Activated T-helper 1 cell treated with anti-CD3 and anti-CD28 coated beads, Interleukin-12 subunit alpha, Interleukin-12 subunit beta, Interleukin-2, Interleukin-4 antibody, amounts not matched to agents 30 ng/mL and 10 ng/mL and 1 ng/mL, durations not matched to agents 14 hours and 24 hours and 36 hours (primary cell): ENCODE measurements at regions of chr9 and their contacts with region 1.

Region 1: GRCh38 chr9:129177791-129178559 is at the start of gene IER5L:
- DNase-seq: peak; percentile 93
- H3K4me3 Mint-ChIP-seq: peak within 1 kb of the TSS; percentile 91
- H3K27ac Mint-ChIP-seq: peak within 1 kb of the TSS; percentile 61
- H3K4me1 Mint-ChIP-seq: peaks cover 16% of the 10 kb centered on the region
- H3K27me3 Mint-ChIP-seq: peaks cover 7% of the 10 kb centered on the region
- total RNA-seq, gene IER5L: 14.4 TPM in 2 replicates

Region 2: GRCh38 chr9:129093421-129094204 is 84.4 kb before region 1 on chr9:
- intact Hi-C with region 1: no loop called
- DNase-seq: no peak
- H3K4me3 Mint-ChIP-seq: no peak overlapping the region
- H3K27ac Mint-ChIP-seq: no peak overlapping the region
- H3K4me1 Mint-ChIP-seq: no peaks in the 10 kb centered on the region
- H3K27me3 Mint-ChIP-seq: no peaks in the 10 kb centered on the region

Region 3: DNA sequence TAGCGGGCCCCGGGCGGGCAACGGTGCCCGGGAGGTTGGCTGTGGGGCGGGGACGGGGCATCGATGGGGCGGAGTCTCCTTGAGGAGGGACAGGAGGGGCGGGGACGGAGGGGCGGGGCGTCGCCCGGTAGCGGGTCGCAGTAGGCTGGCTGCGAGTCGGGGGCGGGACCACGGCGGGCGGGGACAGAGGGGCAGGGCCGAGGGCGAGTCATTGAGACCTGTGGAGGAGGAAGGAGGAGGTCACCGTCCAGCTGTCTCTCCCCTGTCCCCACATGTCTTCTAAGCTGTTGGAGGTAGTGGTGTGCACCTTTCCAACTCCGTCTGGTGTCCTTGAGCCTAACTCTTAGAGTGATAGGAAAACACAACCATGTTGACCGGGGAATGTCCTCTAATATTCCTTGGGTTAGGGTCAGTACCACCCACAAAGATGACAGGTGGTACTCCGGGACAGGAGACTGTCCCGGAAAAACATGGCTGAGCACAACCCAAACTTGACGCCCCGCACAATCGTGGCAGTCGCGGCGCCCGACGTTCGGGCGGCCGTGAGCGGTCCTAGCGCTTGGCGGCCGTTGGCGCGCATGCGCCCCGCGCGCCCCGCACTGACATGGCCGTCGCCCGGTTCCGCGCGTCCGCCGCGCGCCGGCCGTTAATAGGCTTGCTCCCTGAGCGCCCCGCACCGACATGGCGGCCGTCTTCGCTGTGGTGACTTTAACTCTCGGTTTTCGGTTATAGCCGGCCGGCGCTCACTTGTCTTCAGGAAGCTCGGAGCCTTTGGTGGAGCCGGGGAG is 67.0 kb before region 1 on chr9 and contains the starts of genes CRAT and PTPA:
- intact Hi-C with region 1: loop called (anchors 1 kb)
- DNase-seq: peak; percentile 89
- H3K4me3 Mint-ChIP-seq: peak within 1 kb of the TSS; percentile 96
- H3K27ac Mint-ChIP-seq: peak within 1 kb of the TSS; percentile 94
- H3K4me1 Mint-ChIP-seq: peaks cover 36% of the 10 kb centered on the region
- H3K27me3 Mint-ChIP-seq: no peaks in the 10 kb centered on the region
- total RNA-seq, gene CRAT: 9.9 and 10.0 TPM in 2 replicates
- total RNA-seq, gene PTPA: 105 and 114 TPM in 2 replicates

Region 4: GRCh38 chr9:129125476-129125875 is 52.5 kb before region 1 on chr9:
- intact Hi-C with region 1: no loop called
- DNase-seq: no peak
- H3K4me3 Mint-ChIP-seq: no peak overlapping the region
- H3K27ac Mint-ChIP-seq: no peak overlapping the region
- H3K4me1 Mint-ChIP-seq: no peaks in the 10 kb centered on the region
- H3K27me3 Mint-ChIP-seq: no peaks in the 10 kb centered on the region

Region 5: DNA sequence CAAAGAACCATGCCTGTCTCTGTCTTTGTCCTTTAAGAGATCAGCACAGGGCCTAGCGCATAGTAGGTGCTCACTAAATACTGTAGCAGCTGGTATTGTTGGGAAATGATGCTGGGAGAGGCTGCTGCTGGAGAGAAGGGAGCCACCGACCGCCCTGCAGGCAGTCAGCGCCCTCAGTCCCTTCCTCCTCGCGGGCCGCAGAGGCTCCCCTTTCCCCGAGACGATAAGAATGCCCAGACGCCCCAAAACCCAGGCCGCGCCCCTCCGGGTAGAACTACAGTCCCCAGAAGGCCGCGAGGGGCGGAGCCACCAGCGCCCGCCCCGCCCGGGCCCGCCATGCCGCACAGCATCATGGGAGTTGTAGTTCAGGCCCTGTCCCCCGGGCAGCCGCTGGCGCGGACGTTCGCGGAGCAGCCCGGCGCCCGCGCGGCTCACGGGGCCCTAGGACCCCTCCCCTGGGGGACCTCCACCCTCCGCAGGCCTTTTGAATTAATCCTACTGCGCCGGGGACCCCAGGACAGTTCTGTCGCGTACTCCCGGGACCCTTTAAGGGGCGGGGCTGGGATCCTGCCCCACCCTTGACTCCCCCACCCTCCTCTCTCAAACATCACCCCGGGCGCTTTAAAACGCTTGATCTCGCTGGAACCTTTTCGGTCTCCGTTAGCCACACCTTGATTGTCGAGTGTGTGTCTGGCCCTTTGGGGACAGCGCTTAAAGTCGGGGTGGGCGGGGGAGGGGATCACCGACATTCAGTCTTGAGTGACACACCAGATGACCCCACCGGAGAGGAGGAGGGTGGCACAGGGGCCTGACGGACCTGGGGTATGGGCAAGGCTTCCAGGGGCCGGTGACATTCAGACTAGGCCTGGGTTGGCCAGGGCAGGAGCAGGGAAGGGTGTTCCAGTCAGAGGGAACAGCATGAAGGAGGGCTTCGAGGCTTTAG is 24.9 kb after region 1 on chr9:
- intact Hi-C with region 1: loop called (anchors 1 kb)
- DNase-seq: peak; percentile 90
- H3K4me3 Mint-ChIP-seq: peak overlapping the region; percentile 66
- H3K27ac Mint-ChIP-seq: peak overlapping the region; percentile 73
- H3K4me1 Mint-ChIP-seq: peaks cover 6% of the 10 kb centered on the region
- H3K27me3 Mint-ChIP-seq: peaks cover 8% of the 10 kb centered on the region

Region 6: DNA sequence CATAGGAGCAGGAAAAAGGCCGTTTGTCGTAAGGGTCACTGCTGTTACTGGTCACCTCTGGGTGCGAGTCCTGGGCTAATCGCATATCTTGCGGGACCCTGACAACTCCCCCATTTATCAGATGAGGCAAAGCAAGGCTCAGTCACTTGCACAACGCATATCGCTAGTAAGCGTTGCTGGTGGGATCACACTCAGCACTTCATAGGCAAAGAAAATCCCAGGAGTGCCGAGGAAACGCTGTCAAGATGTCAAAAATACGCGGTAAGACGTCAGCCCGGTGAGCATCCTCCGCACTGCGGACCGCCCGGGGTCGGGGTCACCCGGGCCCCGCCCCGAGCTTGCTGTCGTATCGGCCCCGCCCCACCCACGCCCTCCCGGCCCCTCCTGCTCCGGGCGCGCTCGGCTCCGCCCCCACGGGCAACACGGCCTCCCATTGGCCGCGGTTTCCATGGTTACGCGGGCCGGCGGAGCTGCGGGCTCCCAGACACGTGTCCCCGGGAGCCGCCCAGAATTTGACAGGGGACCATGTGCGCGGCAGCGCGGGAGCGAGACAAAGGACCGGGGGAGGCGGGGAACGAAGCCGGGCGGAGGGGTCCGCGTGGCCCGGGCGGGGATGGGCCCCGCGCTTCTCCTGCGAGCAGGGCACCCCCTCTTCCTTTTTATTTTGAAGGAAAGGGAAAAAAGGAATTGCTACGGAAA is 80.3 kb after region 1 on chr9:
- intact Hi-C with region 1: loop called (anchors 2 kb)
- DNase-seq: peak; percentile 85
- H3K4me3 Mint-ChIP-seq: peak overlapping the region; percentile 60
- H3K27ac Mint-ChIP-seq: no peak overlapping the region
- H3K4me1 Mint-ChIP-seq: peaks cover 33% of the 10 kb centered on the region
- H3K27me3 Mint-ChIP-seq: peaks cover 23% of the 10 kb centered on the region

Region 7: DNA sequence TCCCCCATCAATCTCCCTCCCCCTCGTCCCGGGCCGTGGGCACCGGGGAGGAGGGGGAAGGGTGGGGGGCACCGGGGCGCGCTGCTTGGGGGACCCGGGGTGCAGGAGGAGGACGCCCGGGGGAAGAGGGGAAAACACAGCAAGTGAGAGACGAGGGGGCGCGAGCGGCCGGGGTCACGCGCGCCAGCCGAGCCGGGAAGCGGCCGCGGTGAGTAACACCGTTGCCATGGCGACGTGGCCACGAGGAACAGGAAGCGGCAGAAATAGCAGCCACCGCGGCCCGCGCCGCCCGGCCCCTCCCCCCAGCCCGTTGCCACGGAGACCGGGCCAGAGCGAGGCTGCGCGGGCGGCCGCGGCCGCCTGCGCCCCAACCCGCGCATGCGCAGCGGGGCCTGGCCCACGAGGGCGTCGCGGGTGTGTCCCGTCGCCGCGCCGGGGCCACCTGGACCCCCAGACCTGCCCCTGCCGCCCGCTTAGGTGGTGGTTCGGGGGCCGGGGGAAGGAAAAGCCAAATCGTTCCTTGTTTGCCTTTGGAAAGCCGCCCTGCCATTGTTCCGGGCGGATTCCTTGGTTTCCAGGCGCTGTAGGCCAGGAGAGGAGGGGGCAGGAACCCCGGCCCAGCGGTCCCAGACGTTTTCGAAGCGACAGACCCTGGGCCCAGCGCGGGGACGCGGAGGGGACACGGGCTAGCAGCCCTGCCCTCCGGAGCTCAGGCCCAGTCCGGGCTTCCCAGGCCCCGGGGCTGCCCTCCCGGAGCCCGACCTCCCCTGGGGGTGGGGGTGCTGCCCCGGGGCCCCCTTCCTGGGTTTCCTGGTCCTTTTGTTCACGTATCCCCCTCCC is 235.8 kb after region 1 on chr9:
- intact Hi-C with region 1: loop called (anchors 1 kb)
- DNase-seq: peak; percentile 98
- H3K4me3 Mint-ChIP-seq: peak overlapping the region; percentile 83
- H3K27ac Mint-ChIP-seq: peak overlapping the region; percentile 98
- H3K4me1 Mint-ChIP-seq: peaks cover 22% of the 10 kb centered on the region
- H3K27me3 Mint-ChIP-seq: peaks cover 1% of the 10 kb centered on the region

Region 8: DNA sequence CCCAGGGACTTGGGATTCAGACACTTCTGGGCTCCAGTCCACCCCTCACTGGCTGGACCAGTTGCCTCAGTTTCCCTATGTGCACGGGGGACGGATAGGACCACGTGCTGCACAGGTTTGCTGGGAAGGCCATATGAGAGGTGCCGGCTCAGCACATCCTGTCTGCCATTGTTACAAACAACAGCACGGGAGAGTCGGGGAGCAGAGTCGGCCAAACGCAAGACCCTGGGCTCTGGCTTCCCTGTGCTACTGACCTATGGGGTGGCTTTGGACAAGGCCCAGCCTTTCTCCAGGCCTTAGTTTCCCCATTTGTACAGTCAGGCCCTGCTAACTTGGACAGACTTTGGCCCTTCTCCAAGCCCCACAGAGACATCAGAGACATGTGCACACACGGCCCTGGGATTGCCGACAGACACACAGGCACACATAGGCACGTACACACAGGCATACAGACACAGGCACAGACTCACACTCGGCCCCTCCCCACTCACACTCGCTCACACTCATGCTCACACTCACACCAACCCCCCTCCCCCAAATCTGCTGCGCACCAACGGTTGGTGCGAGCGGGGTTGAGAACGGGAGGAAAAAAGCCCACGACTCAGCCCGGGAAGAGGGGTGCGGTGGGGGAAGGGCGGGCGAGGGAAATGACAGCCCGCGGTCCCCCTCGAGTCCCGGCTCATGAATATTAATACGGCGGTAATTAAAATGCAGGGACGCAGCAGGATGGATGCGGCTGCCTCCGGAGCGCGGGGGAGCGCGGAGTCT is 309.9 kb after region 1 on chr9:
- intact Hi-C with region 1: loop called (anchors 2 kb)
- DNase-seq: peak; percentile 17
- H3K4me3 Mint-ChIP-seq: peak overlapping the region; percentile 92
- H3K27ac Mint-ChIP-seq: peak overlapping the region; percentile 98
- H3K4me1 Mint-ChIP-seq: peaks cover 60% of the 10 kb centered on the region
- H3K27me3 Mint-ChIP-seq: peaks cover 5% of the 10 kb centered on the region

Region 9: GRCh38 chr9:129610473-129611301 is 432.7 kb after region 1 on chr9:
- intact Hi-C with region 1: loop called (anchors 1 kb)
- DNase-seq: peak; percentile 62
- H3K4me3 Mint-ChIP-seq: peak overlapping the region; percentile 82
- H3K27ac Mint-ChIP-seq: peak overlapping the region; percentile 83
- H3K4me1 Mint-ChIP-seq: peaks cover 38% of the 10 kb centered on the region
- H3K27me3 Mint-ChIP-seq: peaks cover 5% of the 10 kb centered on the region